ENCODE measurements at regions of chr13 and their contacts with region 1.

Region 1: GRCh38 chr13:27751953-27752525 is 40.2 kb upstream of the GSX1 start:
- DNase-seq: no peak
- CTCF ChIP-seq: no peak

Region 2: GRCh38 chr13:27730191-27730590 is 21.8 kb before region 1 on chr13:
- CTCF ChIA-PET with region 1: no interaction called
- POLR2A ChIA-PET with region 1: no interaction called
- DNase-seq: no peak
- CTCF ChIP-seq: no peak

Region 3: GRCh38 chr13:27770809-27771208 is 18.8 kb after region 1 on chr13:
- CTCF ChIA-PET with region 1: interaction called, 13 read pairs
- POLR2A ChIA-PET with region 1: interaction called, 3 read pairs
- DNase-seq: peak; percentile 57
- CTCF ChIP-seq: peak; percentile 42

Region 4: DNA sequence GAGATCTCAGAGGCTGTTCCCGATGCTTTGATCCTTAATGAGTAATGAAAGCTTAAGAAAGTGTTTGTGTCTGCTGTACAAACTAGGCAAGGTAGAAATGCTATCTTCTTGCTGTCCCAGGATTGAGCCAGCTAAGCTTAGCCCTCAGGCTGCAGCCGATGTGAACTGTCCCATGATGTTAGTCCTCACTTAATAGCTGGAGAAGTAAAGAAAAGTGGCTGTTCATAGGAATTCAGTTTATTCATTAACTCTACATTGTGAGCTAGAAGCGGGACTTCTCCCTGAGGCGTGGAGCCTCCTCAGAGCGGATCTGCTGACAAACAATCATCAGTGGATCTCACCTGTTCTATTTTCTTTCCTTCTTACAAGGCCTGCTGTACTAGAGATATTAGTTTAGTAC is 30.1 kb after region 1 on chr13:
- CTCF ChIA-PET with region 1: no interaction called
- POLR2A ChIA-PET with region 1: no interaction called
- DNase-seq: no peak
- CTCF ChIP-seq: no peak

Measured in GM10248 (cell line).